ENCODE measurements at regions of chr19 and their contacts with region 1.

Region 1: DNA sequence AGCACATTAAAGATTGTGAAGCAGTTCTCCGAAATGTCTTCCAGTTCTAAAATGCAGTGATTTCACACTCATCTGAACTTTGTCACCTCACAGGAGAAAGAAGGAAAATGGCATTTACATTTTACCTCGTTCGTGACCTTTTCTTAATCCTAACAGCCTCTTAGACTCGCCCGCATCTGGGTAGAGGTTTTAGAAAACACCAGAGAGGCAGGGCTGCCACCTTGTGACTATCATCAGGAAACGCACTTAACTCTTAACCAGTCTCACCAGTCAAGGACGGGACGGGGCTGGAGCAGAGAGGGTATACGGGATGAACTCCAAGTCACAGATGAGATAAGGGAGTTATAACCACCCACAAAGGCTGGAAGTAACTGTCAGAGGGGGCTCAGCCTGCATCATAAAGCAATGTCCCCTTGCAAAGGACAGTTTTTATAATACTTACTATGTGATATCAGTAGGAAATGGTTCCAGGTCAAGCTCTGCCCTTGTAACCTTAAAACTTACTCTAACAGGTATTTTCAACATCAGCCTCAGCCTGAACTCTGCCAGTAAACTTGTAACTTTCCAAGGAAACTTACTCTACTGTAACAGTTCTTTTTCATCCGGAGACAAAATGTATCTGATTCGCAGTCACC is 8.6 kb upstream of the CEACAM6 start:
- DNase-seq: peak; percentile 70 to 78 (median 75)
- ATAC-seq: peak; percentile 54
- H3K4me3 ChIP-seq: no peak overlapping the region
- H3K27ac ChIP-seq: no peak overlapping the region
- H3K4me1 ChIP-seq: peaks cover 24% of the 10 kb centered on the region
- H3K27me3 ChIP-seq: no peaks in the 10 kb centered on the region
- CTCF ChIP-seq: peak in 6 of 7 experiments; percentile 46 to 80 (median 74)
- POLR2A ChIP-seq: no peak

Region 2: DNA sequence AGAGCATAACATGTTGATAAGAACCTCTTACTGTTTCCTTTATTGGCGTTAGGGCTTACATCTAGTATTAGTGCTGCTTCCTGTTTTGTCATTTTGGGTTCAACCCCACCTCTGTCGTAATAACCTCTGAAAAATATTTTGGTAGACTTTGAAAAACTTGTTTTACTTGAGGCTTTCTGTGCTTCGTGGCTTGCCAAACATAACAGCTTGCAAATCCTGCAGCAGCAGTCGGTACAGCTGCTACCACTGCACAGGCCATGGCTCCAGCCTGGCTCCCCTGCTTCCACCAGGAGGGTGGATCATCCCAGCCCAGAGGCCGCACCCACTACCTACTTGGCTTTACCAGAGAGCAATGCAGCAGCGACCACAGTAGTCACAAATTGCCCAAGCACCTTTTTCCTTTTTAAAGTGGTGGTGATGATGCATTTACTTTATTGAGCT is 108.0 kb before region 1 on chr19:
- intact Hi-C with region 1: loop called (anchors 10 kb)
- DNase-seq: no peak
- ATAC-seq: no peak
- H3K4me3 ChIP-seq: no peak overlapping the region
- H3K27ac ChIP-seq: no peak overlapping the region
- H3K4me1 ChIP-seq: no peaks in the 10 kb centered on the region
- H3K27me3 ChIP-seq: no peaks in the 10 kb centered on the region
- CTCF ChIP-seq: no peak
- POLR2A ChIP-seq: no peak

Region 3: DNA sequence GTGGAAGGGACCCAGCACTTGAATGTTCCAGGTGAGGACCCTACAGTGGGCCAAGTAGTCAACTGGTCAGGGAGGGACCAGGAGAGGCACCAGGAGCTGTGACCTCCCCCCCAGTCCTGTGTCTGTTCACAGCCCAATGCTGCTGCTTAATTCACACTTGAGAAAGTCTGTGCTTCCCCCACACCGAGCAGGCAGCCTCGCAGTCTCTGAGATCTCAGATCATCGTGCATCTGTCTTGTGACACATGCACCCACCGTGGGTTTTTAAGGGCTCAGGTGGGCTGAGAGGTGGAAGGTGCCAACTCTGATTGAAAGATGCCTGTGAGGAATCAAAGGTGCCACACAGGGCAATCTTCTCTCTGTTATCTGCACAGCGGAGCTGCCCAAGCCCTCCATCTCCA is 32.1 kb before region 1 on chr19:
- intact Hi-C with region 1: no loop called
- DNase-seq: no peak
- ATAC-seq: no peak
- H3K4me3 ChIP-seq: no peak overlapping the region
- H3K27ac ChIP-seq: no peak overlapping the region
- H3K4me1 ChIP-seq: no peaks in the 10 kb centered on the region
- H3K27me3 ChIP-seq: no peaks in the 10 kb centered on the region
- CTCF ChIP-seq: no peak
- POLR2A ChIP-seq: no peak

Measured in body of pancreas (tissue), 4 donors.